ENCODE measurements at regions of chr4 and their contacts with region 1.

Region 1: GRCh38 chr4:119034276-119035008 is 101.2 kb upstream of the MYOZ2 start:
- DNase-seq: no peak
- ATAC-seq: peak in 2 of 8 donors; percentile 3 to 10
- H3K4me3 ChIP-seq: no peak overlapping the region
- H3K27ac ChIP-seq: peak overlapping the region in 8 of 10 donors; percentile 23 to 69 (median 46)
- H3K4me1 ChIP-seq: peaks cover 0 to 62% (median 51%) of the 10 kb centered on the region in 9 donors
- H3K27me3 ChIP-seq: no peaks in the 10 kb centered on the region
- CTCF ChIP-seq: no peak

Region 2: DNA sequence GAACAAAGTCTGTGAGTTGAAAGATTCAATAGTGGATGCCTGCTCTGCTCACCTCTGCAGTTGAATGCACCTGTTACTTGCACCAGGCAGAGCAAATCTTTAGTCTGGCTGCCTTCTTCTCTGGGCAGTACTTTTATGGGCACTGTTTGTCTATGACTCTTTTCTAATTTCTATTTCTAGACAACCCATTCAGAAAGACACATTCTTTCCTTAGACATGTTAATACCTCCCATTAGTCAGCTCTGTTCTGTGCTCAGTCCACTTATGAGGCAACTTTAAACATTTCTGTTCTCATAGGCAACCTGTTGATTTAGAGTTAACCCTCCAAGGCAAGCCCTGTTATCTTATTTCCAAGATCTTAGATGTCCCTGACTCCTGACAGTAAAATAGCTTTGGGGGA is 36.8 kb before region 1 on chr4:
- intact Hi-C with region 1: loop called in 2 of 10 experiments (anchors 5 kb)
- DNase-seq: no peak
- ATAC-seq: peak; percentile 29 to 81 (median 64)
- H3K4me3 ChIP-seq: no peak overlapping the region
- H3K27ac ChIP-seq: peak overlapping the region; percentile 53 to 90 (median 80)
- H3K4me1 ChIP-seq: peaks cover 4 to 81% (median 35%) of the 10 kb centered on the region in 9 donors
- H3K27me3 ChIP-seq: no peaks in the 10 kb centered on the region
- CTCF ChIP-seq: no peak

Region 3: DNA sequence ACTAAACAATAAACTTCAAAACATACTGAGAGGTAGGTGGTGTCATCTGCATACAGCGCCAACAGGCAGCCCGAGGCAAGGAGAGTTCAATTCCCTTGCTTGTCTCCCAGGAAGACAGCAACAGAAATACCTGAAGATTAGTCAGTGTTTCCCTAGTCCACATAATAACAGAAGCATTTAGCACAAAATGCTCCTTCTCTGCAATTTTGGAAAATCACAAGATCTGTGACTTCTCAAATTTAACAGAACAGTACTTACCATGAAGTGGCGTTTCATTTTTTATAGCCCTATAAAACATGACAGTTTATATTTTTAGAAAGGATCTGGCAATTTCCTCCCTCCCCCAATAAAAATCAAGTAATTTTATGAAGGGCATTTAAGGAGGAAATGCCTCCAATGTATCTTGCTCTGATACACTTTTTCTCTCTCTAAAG is 34.1 kb after region 1 on chr4:
- intact Hi-C with region 1: no loop called
- DNase-seq: no peak
- ATAC-seq: no peak
- H3K4me3 ChIP-seq: no peak overlapping the region
- H3K27ac ChIP-seq: no peak overlapping the region
- H3K4me1 ChIP-seq: peaks cover 0 to 9% (median 0%) of the 10 kb centered on the region in 9 donors
- H3K27me3 ChIP-seq: no peaks in the 10 kb centered on the region
- CTCF ChIP-seq: no peak